Heart right ventricle (tissue), 16 donors: ENCODE measurements at regions of chr2 and their contacts with region 1.

Region 1: GRCh38 chr2:160109936-160110673 is 47.7 kb upstream of the PLA2R1 start:
- DNase-seq: peak; percentile 39 to 71
- ATAC-seq: peak in 7 of 8 donors; percentile 79 to 92 (median 86)
- H3K4me3 ChIP-seq: no peak overlapping the region
- H3K27ac ChIP-seq: no peak overlapping the region
- H3K4me1 ChIP-seq: peaks cover 0 to 4% (median 0%) of the 10 kb centered on the region in 9 donors
- H3K27me3 ChIP-seq: no peaks in the 10 kb centered on the region
- CTCF ChIP-seq: peak; percentile 62 to 88 (median 82)

Region 2: DNA sequence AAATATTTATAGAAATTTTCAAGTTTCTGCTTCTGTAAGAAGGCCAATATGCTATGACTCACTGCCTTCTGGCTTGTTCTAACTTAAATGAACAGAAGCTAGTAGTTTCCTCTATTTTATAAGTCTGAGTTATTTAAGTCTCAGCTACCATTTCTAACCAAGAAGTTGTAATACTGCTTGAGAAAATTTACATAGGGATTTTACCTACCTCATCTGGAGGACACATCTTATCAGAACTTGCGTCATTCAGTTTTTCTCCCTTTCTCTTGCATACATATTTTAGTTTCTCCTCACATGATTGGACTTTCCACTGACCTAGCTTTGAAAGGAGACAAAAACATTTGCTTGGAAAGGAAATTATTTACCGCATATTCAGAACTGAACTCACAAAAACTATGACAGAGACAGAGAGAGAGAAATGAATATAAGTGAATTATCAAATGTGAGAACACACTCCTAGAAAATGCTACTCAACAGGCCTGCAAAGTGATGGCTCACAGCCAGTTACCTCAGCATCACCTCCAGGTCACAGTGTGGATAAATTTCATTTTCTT is 231.0 kb before region 1 on chr2:
- intact Hi-C with region 1: no loop called
- DNase-seq: no peak
- ATAC-seq: no peak
- H3K4me3 ChIP-seq: no peak overlapping the region
- H3K27ac ChIP-seq: no peak overlapping the region
- H3K4me1 ChIP-seq: peaks cover 0 to 6% (median 0%) of the 10 kb centered on the region in 9 donors
- H3K27me3 ChIP-seq: no peaks in the 10 kb centered on the region
- CTCF ChIP-seq: no peak

Region 3: GRCh38 chr2:159895258-159896065 is 214.6 kb before region 1 on chr2:
- intact Hi-C with region 1: no loop called
- DNase-seq: no peak
- ATAC-seq: no peak
- H3K4me3 ChIP-seq: no peak overlapping the region
- H3K27ac ChIP-seq: no peak overlapping the region
- H3K4me1 ChIP-seq: peaks cover 0 to 37% (median 0%) of the 10 kb centered on the region in 9 donors
- H3K27me3 ChIP-seq: no peaks in the 10 kb centered on the region
- CTCF ChIP-seq: no peak

Region 4: DNA sequence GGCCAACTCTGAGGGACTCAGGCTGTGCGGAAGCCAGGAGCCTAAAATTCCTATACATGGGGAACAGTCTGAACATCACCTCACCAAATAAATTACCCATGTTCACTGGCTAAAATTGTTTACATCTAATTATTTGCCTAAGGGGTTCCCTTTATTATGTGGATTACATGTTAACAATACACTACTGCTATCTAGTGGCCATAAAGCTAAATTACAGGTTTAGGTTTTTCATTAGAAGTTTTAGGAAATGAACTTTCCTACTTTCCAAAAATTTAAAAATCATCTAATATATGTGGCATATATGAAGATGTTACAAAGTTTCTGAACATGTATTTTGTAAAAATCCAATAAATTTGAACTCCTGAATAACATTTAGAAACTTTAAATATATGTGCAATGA is 87.9 kb before region 1 on chr2:
- intact Hi-C with region 1: no loop called
- DNase-seq: no peak
- ATAC-seq: no peak
- H3K4me3 ChIP-seq: no peak overlapping the region
- H3K27ac ChIP-seq: no peak overlapping the region
- H3K4me1 ChIP-seq: peaks cover 0 to 3% (median 0%) of the 10 kb centered on the region in 9 donors
- H3K27me3 ChIP-seq: no peaks in the 10 kb centered on the region
- CTCF ChIP-seq: peak in 2 of 9 donors; percentile 17 to 47

Region 5: DNA sequence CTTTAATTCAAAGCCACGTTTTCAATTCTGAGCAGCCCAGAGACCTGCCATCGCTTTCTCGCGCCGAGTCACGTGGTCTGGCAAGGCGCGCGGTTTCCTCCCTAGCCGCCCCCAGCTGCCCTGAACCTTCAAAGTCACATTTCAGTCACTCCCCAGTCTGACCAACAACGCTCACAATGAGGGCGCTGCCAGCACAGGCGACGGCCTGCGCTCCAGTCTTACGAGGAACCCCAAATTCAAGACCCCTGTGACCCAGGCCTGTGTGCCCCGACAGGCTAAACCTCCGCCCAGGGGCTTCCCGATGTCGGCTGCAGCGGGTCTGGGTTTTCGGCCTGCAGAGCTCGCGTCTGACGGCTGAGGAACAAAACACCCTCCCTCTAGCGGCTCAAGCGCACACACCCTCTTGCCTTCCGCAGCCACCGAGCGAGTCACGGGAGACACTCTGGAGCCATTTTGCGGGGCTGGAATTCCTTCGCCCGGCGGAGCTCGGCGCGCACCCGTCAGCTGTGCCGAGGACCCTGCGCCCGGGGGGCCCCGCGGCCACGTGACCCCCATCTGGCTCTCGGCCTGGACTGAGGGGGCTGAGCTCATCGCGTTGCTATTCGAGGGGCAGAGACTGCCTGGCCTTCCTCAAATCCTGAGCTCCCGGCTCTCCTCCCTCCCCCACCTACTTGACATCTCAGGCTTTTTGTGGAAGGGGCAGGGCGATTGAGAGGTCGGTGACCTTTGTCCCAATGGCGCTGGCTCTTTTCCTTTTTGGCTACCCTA is 159.9 kb after region 1 on chr2:
- intact Hi-C with region 1: loop called in 3 of 10 experiments (anchors 5 to 10 kb)
- DNase-seq: peak; percentile 88 to 93
- ATAC-seq: peak; percentile 88 to 94 (median 92)
- H3K4me3 ChIP-seq: peak overlapping the region; percentile 12 to 60 (median 56)
- H3K27ac ChIP-seq: peak overlapping the region; percentile 90 to 99 (median 95)
- H3K4me1 ChIP-seq: peaks cover 4 to 43% (median 33%) of the 10 kb centered on the region in 9 donors
- H3K27me3 ChIP-seq: no peaks in the 10 kb centered on the region
- CTCF ChIP-seq: peak; percentile 60 to 85 (median 69)

Region 6: DNA sequence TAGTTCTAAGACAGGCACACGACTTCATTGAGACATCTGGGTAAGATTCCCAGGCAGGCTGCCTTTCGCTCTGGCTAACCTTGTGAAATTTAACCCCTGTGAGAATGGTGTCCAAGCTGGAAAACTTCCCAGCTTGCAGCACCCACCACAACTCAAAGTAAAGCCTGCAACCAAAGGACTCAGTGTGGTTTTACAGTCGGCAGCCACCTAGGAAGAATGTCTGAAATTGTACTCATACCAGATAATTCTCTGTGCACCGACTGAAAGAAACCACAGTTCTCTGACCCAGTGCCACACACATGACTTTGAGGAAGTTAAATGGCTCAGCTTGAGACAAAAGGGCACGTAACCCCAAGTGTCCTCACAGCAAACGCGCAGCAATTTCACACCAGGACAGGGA is 257.8 kb after region 1 on chr2:
- intact Hi-C with region 1: no loop called
- DNase-seq: no peak
- ATAC-seq: peak in 7 of 8 donors; percentile 11 to 52 (median 19)
- H3K4me3 ChIP-seq: peak overlapping the region in 2 of 10 donors; percentile 6 to 9
- H3K27ac ChIP-seq: peak overlapping the region in 8 of 10 donors; percentile 34 to 88 (median 68)
- H3K4me1 ChIP-seq: peaks cover 9 to 100% (median 99%) of the 10 kb centered on the region in 9 donors
- H3K27me3 ChIP-seq: no peaks in the 10 kb centered on the region
- CTCF ChIP-seq: no peak

Region 7: GRCh38 chr2:160970052-160970965 is 860.2 kb after region 1 on chr2:
- intact Hi-C with region 1: loop called in 2 of 10 experiments (anchors 5 to 10 kb)
- DNase-seq: peak in 1 of 2 donors; percentile 57
- ATAC-seq: peak; percentile 32 to 81 (median 74)
- H3K4me3 ChIP-seq: peak overlapping the region in 7 of 10 donors; percentile 9 to 40 (median 32)
- H3K27ac ChIP-seq: peak overlapping the region in 9 of 10 donors; percentile 14 to 75 (median 68)
- H3K4me1 ChIP-seq: peaks cover 0 to 24% (median 13%) of the 10 kb centered on the region in 9 donors
- H3K27me3 ChIP-seq: no peaks in the 10 kb centered on the region
- CTCF ChIP-seq: peak; percentile 49 to 86 (median 80)

Region 8: DNA sequence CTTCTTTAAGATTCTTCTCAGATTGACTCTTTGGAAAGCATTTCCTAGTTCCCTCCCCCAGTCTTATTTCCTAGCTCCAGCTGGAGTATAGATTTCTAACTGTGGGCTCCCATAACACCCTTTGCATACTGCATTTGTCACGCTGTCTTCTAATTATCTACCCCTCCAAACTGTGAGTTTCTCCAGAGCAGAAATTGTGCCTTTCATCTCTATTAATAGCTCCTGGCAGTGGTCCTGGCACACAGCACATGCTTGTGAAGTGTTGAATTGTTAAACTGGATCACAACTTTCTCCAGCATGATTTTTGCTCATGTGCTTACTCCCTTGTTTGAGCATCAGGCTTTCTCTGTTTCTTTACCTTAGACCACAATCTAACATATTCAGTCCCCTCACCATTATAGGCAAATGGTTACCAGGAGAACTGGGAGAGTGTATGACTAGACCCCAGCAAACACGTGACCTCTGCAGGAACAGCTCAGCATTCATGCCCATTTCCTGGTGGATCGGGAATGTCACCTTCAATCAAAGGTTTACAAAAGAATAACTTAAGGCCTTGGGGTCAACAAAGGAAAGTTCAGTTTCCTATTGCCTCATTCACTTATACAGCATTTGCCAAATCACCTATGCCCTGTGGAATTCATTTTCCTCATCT is 874.4 kb after region 1 on chr2:
- intact Hi-C with region 1: loop called in 2 of 10 experiments (anchors 10 kb)
- DNase-seq: peak in 1 of 2 donors; percentile 76
- ATAC-seq: peak; percentile 85 to 97 (median 91)
- H3K4me3 ChIP-seq: no peak overlapping the region
- H3K27ac ChIP-seq: peak overlapping the region in 9 of 10 donors; percentile 11 to 80 (median 59)
- H3K4me1 ChIP-seq: peaks cover 0 to 20% (median 15%) of the 10 kb centered on the region in 9 donors
- H3K27me3 ChIP-seq: no peaks in the 10 kb centered on the region
- CTCF ChIP-seq: no peak

Region 9: GRCh38 chr2:160994141-160995002 is 884.3 kb after region 1 on chr2:
- intact Hi-C with region 1: loop called in 9 of 10 experiments (anchors 1 to 10 kb)
- DNase-seq: peak in 1 of 2 donors; percentile 83
- ATAC-seq: peak; percentile 81 to 94 (median 89)
- H3K4me3 ChIP-seq: peak overlapping the region in 3 of 10 donors; percentile 10 to 20 (median 18)
- H3K27ac ChIP-seq: peak overlapping the region in 9 of 10 donors; percentile 11 to 72 (median 41)
- H3K4me1 ChIP-seq: peaks cover 0 to 14% (median 5%) of the 10 kb centered on the region in 9 donors
- H3K27me3 ChIP-seq: no peaks in the 10 kb centered on the region
- CTCF ChIP-seq: peak; percentile 77 to 91 (median 87)

Region 10: GRCh38 chr2:161004379-161004778 is 894.3 kb after region 1 on chr2:
- intact Hi-C with region 1: loop called in 2 of 10 experiments (anchors 10 kb)
- DNase-seq: no peak
- ATAC-seq: no peak
- H3K4me3 ChIP-seq: no peak overlapping the region
- H3K27ac ChIP-seq: no peak overlapping the region
- H3K4me1 ChIP-seq: no peaks in the 10 kb centered on the region
- H3K27me3 ChIP-seq: no peaks in the 10 kb centered on the region
- CTCF ChIP-seq: peak in 7 of 9 donors; percentile 11 to 50 (median 36)

Region 11: DNA sequence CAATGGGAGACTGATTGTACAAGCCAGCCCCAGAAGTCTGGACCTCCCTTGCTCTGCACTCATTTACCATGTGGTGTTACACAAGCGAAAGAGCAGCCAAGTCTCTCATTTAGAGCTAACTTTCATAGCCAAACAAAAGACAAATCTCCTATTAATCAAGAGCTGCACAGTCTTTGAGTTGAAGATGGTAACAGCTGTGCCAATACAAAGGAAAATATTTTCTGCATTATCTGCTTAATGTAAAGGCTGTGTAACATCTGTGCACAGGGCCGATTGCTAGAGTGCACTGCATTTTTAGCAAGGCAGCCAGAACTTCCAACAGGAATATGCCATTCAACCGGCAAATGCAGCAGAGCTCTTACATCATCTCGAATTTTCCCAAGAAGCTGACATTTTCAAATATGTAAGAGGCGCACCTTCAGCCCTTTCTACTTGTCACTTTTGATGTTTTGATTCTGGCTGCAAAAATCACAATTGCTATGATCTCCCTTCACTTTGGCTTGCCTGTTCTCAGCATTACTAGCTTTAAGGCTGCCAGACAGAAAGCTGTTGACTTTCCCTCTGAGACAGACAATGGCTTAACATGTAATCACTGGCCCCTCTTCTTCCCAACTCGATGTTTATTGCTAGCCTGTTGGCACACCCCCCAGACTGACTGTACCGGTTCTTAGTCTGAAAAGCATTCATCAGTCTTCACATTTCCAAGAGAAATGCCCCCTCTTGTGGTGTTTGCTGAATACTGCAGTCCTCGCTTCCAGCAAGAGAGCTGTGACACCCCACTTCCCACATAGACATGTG is 953.3 kb after region 1 on chr2:
- intact Hi-C with region 1: loop called in 3 of 10 experiments (anchors 5 to 10 kb)
- DNase-seq: peak; percentile 13 to 79
- ATAC-seq: peak; percentile 71 to 88 (median 82)
- H3K4me3 ChIP-seq: peak overlapping the region in 1 of 10 donors; percentile 24
- H3K27ac ChIP-seq: no peak overlapping the region
- H3K4me1 ChIP-seq: peaks cover 0 to 21% (median 2%) of the 10 kb centered on the region in 9 donors
- H3K27me3 ChIP-seq: no peaks in the 10 kb centered on the region
- CTCF ChIP-seq: peak; percentile 79 to 94 (median 90)